Naive thymus-derived CD4-positive, alpha-beta T cell (primary cell): ENCODE measurements at regions of chr18 and their contacts with region 1.

Region 1: GRCh38 chr18:9614401-9615279 is at the start of gene PPP4R1:
- DNase-seq: peak; percentile 33 to 79 (median 56)
- ATAC-seq: peak; percentile 84
- H3K4me3 ChIP-seq: peak within 1 kb of the TSS; percentile 65
- H3K4me3 Mint-ChIP-seq: peak within 1 kb of the TSS; percentile 88 to 99 (median 96)
- H3K27ac ChIP-seq: peak within 1 kb of the TSS; percentile 65
- H3K27ac Mint-ChIP-seq: peak within 1 kb of the TSS; percentile 71 to 96 (median 89)
- H3K4me1 ChIP-seq: peaks cover 12 to 17% of the 10 kb centered on the region in 2 donors
- H3K4me1 Mint-ChIP-seq: peaks cover 26 to 46% (median 33%) of the 10 kb centered on the region in 7 donors
- H3K27me3 ChIP-seq: no peaks in the 10 kb centered on the region
- H3K27me3 Mint-ChIP-seq: peaks cover 0 to 3% (median 0%) of the 10 kb centered on the region in 5 donors
- total RNA-seq, gene PPP4R1: 33.0 to 54.6 (median 38.2) TPM

Region 2: DNA sequence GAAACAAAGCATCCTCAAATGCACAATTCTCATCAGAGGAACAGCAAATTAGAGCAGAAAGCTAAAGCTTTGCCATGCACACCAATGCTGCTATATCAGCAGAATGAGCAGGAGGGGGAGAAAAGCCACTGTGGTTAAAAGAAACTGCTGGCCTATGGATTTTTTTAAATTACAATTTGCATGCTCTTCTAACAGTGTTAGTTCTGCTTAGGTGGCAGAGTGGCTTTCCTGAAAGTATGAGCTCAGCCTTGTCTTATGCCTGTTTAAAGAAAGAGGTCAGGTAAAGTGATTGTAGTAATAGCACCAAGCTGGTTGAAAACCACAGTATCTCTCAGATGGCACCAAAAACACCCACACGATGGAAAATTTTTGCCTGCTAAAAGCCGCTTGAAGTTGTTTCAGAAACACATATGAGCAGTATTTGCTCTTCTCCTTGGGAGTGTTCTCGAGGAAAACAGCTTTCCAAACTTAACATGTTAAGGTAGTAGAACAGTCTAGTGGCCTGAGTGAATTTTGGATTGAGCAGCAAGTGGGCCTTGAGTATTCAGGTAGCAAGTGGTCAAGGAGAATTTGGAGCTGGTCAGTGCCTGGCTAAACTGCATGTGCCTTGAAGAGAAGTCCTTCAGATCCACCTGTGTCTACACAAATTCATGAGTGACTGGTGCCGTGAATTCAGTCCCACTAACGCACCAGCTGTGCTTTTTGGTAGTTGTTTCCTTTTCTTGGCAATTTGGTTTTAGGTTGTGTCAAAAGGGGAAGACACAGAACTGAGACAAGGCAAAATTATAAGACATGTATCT is 531.7 kb before region 1 on chr18:
- CTCF ChIA-PET with region 1: no interaction called
- POLR2A ChIA-PET with region 1: no interaction called
- intact Hi-C with region 1: loop called in 1 of 2 experiments (anchors 10 kb)
- DNase-seq: peak in 8 of 9 donors; percentile 16 to 52 (median 34)
- ATAC-seq: peak; percentile 86
- H3K4me3 ChIP-seq: peak overlapping the region; percentile 18
- H3K4me3 Mint-ChIP-seq: peak overlapping the region; percentile 42 to 88 (median 72)
- H3K27ac ChIP-seq: peak overlapping the region; percentile 76
- H3K27ac Mint-ChIP-seq: peak overlapping the region; percentile 82 to 98 (median 94)
- H3K4me1 ChIP-seq: peaks cover 10 to 19% of the 10 kb centered on the region in 2 donors
- H3K4me1 Mint-ChIP-seq: peaks cover 19 to 51% (median 44%) of the 10 kb centered on the region in 7 donors
- H3K27me3 ChIP-seq: no peaks in the 10 kb centered on the region
- H3K27me3 Mint-ChIP-seq: no peaks in the 10 kb centered on the region

Region 3: DNA sequence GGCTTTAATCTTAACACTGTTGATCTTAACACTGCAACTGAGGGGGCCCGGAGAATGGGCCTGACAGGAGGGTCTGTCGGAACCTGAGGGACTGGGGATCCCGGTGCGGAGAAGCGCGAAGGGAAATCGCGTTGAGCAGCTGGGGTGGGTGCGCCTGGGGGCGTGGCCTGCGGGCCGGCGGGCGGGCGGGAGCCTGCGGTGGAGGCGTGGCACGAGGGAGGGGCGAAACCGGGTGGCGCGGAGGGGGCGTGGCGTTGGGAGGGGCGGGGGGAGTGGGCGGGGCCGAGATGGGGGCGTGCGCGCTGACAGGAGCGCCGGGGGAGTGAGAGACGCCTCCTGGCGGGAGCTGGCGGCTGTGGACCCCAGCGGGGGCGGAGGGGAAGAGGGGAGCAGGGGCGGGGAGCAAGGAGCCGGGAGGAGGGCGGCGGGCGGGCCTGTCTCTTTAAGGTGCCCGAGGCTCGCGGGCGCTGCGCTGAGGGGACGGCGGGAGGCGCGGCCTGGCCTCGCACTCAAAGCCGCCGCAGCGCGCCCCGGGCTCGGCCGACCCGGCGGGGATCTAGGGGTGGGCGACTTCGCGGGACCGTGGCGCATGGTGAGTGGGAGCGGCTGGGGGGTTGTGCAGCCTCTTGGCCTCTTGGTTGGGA is 280.2 kb before region 1 on chr18 and contains the start of gene TWSG1:
- CTCF ChIA-PET with region 1: no interaction called
- POLR2A ChIA-PET with region 1: no interaction called
- intact Hi-C with region 1: loop called (anchors 1 kb)
- DNase-seq: peak; percentile 86 to 94 (median 90)
- ATAC-seq: peak; percentile 94
- H3K4me3 ChIP-seq: peak within 1 kb of the TSS; percentile 90
- H3K4me3 Mint-ChIP-seq: peak within 1 kb of the TSS; percentile 86 to 94 (median 92)
- H3K27ac ChIP-seq: peak within 1 kb of the TSS; percentile 74
- H3K27ac Mint-ChIP-seq: peak within 1 kb of the TSS; percentile 63 to 97 (median 88)
- H3K4me1 ChIP-seq: peaks cover 0 to 8% of the 10 kb centered on the region in 2 donors
- H3K4me1 Mint-ChIP-seq: peaks cover 1 to 33% (median 24%) of the 10 kb centered on the region in 7 donors
- H3K27me3 ChIP-seq: no peaks in the 10 kb centered on the region
- H3K27me3 Mint-ChIP-seq: peaks cover 0 to 35% (median 0%) of the 10 kb centered on the region in 5 donors
- total RNA-seq, gene TWSG1: 2.4 to 7.6 (median 5.8) TPM

Region 4: GRCh38 chr18:9433671-9434121 is 180.9 kb before region 1 on chr18:
- CTCF ChIA-PET with region 1: no interaction called
- POLR2A ChIA-PET with region 1: no interaction called
- intact Hi-C with region 1: no loop called
- DNase-seq: no peak
- ATAC-seq: peak; percentile 38
- H3K4me3 ChIP-seq: no peak overlapping the region
- H3K4me3 Mint-ChIP-seq: peak overlapping the region in 5 of 10 donors; percentile 0 to 48 (median 33)
- H3K27ac ChIP-seq: no peak overlapping the region
- H3K27ac Mint-ChIP-seq: peak overlapping the region in 1 of 9 donors; percentile 6
- H3K4me1 ChIP-seq: no peaks in the 10 kb centered on the region
- H3K4me1 Mint-ChIP-seq: peaks cover 0 to 8% (median 7%) of the 10 kb centered on the region in 7 donors
- H3K27me3 ChIP-seq: no peaks in the 10 kb centered on the region
- H3K27me3 Mint-ChIP-seq: peaks cover 3 to 11% (median 7%) of the 10 kb centered on the region in 5 donors

Region 5: DNA sequence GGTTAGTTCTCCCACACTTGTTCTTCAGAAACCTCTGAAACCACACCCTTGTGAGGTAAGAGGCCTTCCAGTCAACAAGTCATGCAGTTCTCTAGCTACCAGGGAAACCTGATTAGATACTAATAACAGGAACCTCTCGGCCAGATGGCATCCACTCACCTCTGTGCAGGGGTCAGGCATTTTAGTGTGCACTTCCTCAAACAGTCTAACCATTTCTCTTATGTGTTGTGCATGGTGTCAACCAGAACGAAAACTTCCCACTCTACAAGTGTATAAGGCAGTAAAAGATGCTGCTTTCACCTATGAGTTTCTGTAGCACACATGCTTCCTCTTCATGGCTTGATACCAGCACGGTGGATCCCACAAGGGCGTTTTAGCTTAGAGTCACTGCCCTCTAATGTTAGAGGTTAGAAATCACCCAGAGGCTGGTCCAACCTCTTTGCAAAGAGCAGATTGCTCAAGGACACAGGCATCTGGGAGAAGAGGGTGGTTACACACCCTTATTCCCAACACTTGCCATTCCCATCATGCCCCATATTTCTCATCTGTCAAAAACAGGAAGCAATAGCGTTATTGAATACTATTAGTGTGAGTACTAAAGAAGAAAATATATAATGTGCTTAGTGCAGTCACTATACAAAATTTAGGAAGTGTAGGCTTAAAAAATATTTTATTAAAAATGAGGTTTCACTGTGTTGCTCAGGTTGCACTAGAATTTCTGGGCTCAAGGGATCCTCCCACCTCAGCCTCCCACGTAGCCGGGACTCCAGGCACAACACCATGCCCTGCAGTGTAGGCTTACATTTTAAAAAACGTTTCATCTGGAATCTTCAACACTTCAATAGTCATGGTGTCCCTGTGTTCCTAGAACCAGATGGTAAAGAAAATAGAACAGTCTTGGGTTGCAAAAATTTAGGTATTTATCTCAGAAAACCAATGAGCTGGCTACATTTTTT is 58.9 kb after region 1 on chr18:
- CTCF ChIA-PET with region 1: no interaction called
- POLR2A ChIA-PET with region 1: no interaction called
- intact Hi-C with region 1: loop called (anchors 1 to 2 kb)
- DNase-seq: peak in 2 of 9 donors; percentile 2 to 11
- ATAC-seq: peak; percentile 93
- H3K4me3 ChIP-seq: no peak overlapping the region
- H3K4me3 Mint-ChIP-seq: peak overlapping the region in 1 of 10 donors; percentile 21
- H3K27ac ChIP-seq: no peak overlapping the region
- H3K27ac Mint-ChIP-seq: no peak overlapping the region
- H3K4me1 ChIP-seq: no peaks in the 10 kb centered on the region
- H3K4me1 Mint-ChIP-seq: peaks cover 0 to 6% (median 5%) of the 10 kb centered on the region in 7 donors
- H3K27me3 ChIP-seq: no peaks in the 10 kb centered on the region
- H3K27me3 Mint-ChIP-seq: peaks cover 0 to 21% (median 4%) of the 10 kb centered on the region in 5 donors

Region 6: DNA sequence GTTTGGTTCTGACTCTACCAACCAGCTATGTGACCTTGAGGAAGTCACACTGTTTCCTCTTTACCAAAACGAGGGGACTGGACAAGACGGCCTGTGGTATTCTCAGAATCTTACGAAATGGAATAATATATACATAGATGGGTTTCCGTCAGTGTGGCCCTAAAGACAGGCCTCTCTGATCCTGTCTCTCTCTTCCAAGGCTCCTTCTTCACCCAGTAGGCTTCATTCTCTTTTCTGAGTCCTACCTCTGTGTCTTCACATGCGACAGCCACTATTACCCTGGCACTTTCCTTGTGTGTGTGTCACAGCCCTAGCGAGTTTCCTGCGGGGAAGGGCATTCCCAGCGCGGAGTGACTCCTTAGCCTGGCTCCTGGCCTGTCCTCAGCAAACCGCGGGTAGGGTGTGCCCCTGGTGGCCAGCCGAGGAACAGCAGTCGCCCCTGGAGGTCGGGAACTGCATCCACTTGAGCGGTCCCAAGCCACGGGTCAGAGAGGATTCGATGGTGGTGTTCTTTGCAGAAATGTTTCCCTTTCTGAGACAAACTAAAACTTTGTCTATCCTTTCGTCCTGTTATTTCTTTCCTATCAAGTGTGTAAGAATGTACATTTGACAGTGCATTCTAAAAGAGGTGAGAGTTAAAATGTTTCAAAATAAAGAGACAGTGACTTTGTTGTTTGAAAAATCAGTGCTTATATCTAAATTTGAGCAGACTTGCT is 156.8 kb after region 1 on chr18:
- CTCF ChIA-PET with region 1: no interaction called
- POLR2A ChIA-PET with region 1: no interaction called
- intact Hi-C with region 1: loop called in 1 of 2 experiments (anchors 1 kb)
- DNase-seq: peak in 7 of 9 donors; percentile 5 to 72 (median 24)
- ATAC-seq: peak; percentile 75
- H3K4me3 ChIP-seq: no peak overlapping the region
- H3K4me3 Mint-ChIP-seq: no peak overlapping the region
- H3K27ac ChIP-seq: no peak overlapping the region
- H3K27ac Mint-ChIP-seq: no peak overlapping the region
- H3K4me1 ChIP-seq: no peaks in the 10 kb centered on the region
- H3K4me1 Mint-ChIP-seq: peaks cover 0 to 12% (median 0%) of the 10 kb centered on the region in 7 donors
- H3K27me3 ChIP-seq: no peaks in the 10 kb centered on the region
- H3K27me3 Mint-ChIP-seq: peaks cover 19 to 25% (median 25%) of the 10 kb centered on the region in 5 donors

Region 7: DNA sequence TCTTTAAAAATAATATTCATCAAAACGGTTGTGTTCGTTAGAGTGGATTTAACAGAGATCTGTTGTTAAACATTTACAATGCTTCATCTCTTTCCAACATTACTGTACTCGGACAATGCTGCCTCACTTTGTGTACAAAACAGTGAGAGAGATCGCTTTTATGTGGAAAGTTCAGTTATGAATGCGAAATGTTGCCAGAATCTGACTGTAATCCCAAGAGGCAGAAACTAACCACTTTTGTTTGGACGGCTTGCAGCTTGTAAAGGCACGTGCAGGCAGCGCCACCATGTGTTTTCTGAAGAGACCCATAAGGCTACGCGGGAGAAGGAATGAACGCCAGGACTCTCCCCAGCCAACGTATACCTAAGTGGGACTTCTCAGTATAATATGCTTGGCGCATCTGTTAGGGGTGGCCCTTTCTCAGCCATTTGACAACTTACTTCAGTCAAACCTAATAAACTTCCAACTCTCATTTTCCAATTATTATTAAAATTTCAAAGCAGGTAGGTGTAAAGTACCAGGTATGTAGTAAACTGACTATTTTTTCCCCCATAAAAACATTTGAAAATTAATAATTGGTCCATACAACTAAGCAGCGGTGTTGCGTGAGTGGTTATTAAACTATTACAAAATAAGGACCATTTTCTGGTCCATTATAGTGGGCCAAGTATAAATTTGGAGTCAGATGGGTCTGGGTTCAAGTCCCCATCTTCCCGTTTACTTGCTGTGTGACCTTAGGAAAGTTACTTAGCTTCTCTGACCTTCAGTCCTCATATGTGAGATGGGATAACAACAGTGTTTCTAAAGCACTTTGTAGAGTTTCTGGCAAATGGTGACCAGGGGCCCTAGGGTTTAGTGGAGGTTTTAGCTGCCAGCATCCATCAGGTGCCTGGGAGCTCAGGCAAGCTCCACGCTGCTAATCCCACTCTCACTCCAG is 905.6 kb after region 1 on chr18:
- CTCF ChIA-PET with region 1: no interaction called
- POLR2A ChIA-PET with region 1: no interaction called
- intact Hi-C with region 1: loop called (anchors 2 to 10 kb)
- DNase-seq: peak; percentile 28 to 59 (median 47)
- ATAC-seq: peak; percentile 91
- H3K4me3 ChIP-seq: no peak overlapping the region
- H3K4me3 Mint-ChIP-seq: peak overlapping the region in 1 of 10 donors; percentile 16
- H3K27ac ChIP-seq: no peak overlapping the region
- H3K27ac Mint-ChIP-seq: no peak overlapping the region
- H3K4me1 ChIP-seq: peaks cover 0 to 2% of the 10 kb centered on the region in 2 donors
- H3K4me1 Mint-ChIP-seq: peaks cover 10 to 19% (median 14%) of the 10 kb centered on the region in 7 donors
- H3K27me3 ChIP-seq: peaks cover 0 to 3% of the 10 kb centered on the region in 2 donors
- H3K27me3 Mint-ChIP-seq: peaks cover 24 to 45% (median 28%) of the 10 kb centered on the region in 5 donors